ENCODE measurements at regions of chr1 and their contacts with region 1.

Region 1: GRCh38 chr1:15820478-15820877 is 13.0 kb upstream of the UQCRHL start:
- DNase-seq: no peak
- ATAC-seq: no peak
- H3K4me3 ChIP-seq: no peak overlapping the region
- H3K4me3 Mint-ChIP-seq: no peak overlapping the region
- H3K27ac ChIP-seq: no peak overlapping the region
- H3K27ac Mint-ChIP-seq: no peak overlapping the region
- H3K4me1 ChIP-seq: no peaks in the 10 kb centered on the region
- H3K4me1 Mint-ChIP-seq: peaks cover 3 to 14% (median 4%) of the 10 kb centered on the region in 7 donors
- H3K27me3 ChIP-seq: no peaks in the 10 kb centered on the region
- H3K27me3 Mint-ChIP-seq: no peaks in the 10 kb centered on the region

Region 2: GRCh38 chr1:15902882-15903281 is 82.4 kb after region 1 on chr1:
- CTCF ChIA-PET with region 1: interaction called, 4 read pairs
- POLR2A ChIA-PET with region 1: interaction called, 3 read pairs
- intact Hi-C with region 1: loop called in 1 of 2 experiments (anchors 1 kb)
- DNase-seq: no peak
- ATAC-seq: no peak
- H3K4me3 ChIP-seq: no peak overlapping the region
- H3K4me3 Mint-ChIP-seq: no peak overlapping the region
- H3K27ac ChIP-seq: no peak overlapping the region
- H3K27ac Mint-ChIP-seq: peak overlapping the region in 2 of 9 donors; percentile 18 to 53
- H3K4me1 ChIP-seq: peaks cover 0 to 3% of the 10 kb centered on the region in 2 donors
- H3K4me1 Mint-ChIP-seq: peaks cover 19 to 46% (median 41%) of the 10 kb centered on the region in 7 donors
- H3K27me3 ChIP-seq: no peaks in the 10 kb centered on the region
- H3K27me3 Mint-ChIP-seq: no peaks in the 10 kb centered on the region

Region 3: GRCh38 chr1:15918962-15919715 is 98.7 kb after region 1 on chr1:
- CTCF ChIA-PET with region 1: interaction called, 11 read pairs
- POLR2A ChIA-PET with region 1: interaction called, 4 read pairs
- intact Hi-C with region 1: loop called in 1 of 2 experiments (anchors 5 kb)
- DNase-seq: peak in 1 of 9 donors; percentile 74
- ATAC-seq: peak; percentile 68
- H3K4me3 ChIP-seq: no peak overlapping the region
- H3K4me3 Mint-ChIP-seq: peak overlapping the region in 4 of 10 donors; percentile 8 to 76 (median 20)
- H3K27ac ChIP-seq: no peak overlapping the region
- H3K27ac Mint-ChIP-seq: peak overlapping the region in 7 of 9 donors; percentile 16 to 77 (median 33)
- H3K4me1 ChIP-seq: peaks cover 10 to 22% of the 10 kb centered on the region in 2 donors
- H3K4me1 Mint-ChIP-seq: peaks cover 9 to 40% (median 31%) of the 10 kb centered on the region in 7 donors
- H3K27me3 ChIP-seq: no peaks in the 10 kb centered on the region
- H3K27me3 Mint-ChIP-seq: no peaks in the 10 kb centered on the region

Region 4: GRCh38 chr1:15994590-15995351 is 174.3 kb after region 1 on chr1:
- CTCF ChIA-PET with region 1: interaction called, 3 read pairs
- POLR2A ChIA-PET with region 1: no interaction called
- intact Hi-C with region 1: loop called in 1 of 2 experiments (anchors 1 kb)
- DNase-seq: peak in 4 of 9 donors; percentile 11 to 60 (median 30)
- ATAC-seq: peak; percentile 79
- H3K4me3 ChIP-seq: no peak overlapping the region
- H3K4me3 Mint-ChIP-seq: no peak overlapping the region
- H3K27ac ChIP-seq: no peak overlapping the region
- H3K27ac Mint-ChIP-seq: peak overlapping the region in 1 of 9 donors; percentile 9
- H3K4me1 ChIP-seq: no peaks in the 10 kb centered on the region
- H3K4me1 Mint-ChIP-seq: no peaks in the 10 kb centered on the region
- H3K27me3 ChIP-seq: no peaks in the 10 kb centered on the region
- H3K27me3 Mint-ChIP-seq: peaks cover 0 to 3% (median 0%) of the 10 kb centered on the region in 5 donors

Region 5: GRCh38 chr1:16055613-16056520 is 235.4 kb after region 1 on chr1:
- CTCF ChIA-PET with region 1: interaction called, 8 read pairs
- POLR2A ChIA-PET with region 1: no interaction called
- intact Hi-C with region 1: loop called (anchors 1 kb)
- DNase-seq: peak; percentile 71 to 87 (median 78)
- ATAC-seq: peak; percentile 97
- H3K4me3 ChIP-seq: no peak overlapping the region
- H3K4me3 Mint-ChIP-seq: peak overlapping the region in 2 of 10 donors; percentile 17 to 43
- H3K27ac ChIP-seq: no peak overlapping the region
- H3K27ac Mint-ChIP-seq: peak overlapping the region in 4 of 9 donors; percentile 45 to 76 (median 68)
- H3K4me1 ChIP-seq: no peaks in the 10 kb centered on the region
- H3K4me1 Mint-ChIP-seq: peaks cover 5 to 6% (median 6%) of the 10 kb centered on the region in 7 donors
- H3K27me3 ChIP-seq: no peaks in the 10 kb centered on the region
- H3K27me3 Mint-ChIP-seq: peaks cover 0 to 4% (median 0%) of the 10 kb centered on the region in 5 donors

Measured in naive thymus-derived CD4-positive, alpha-beta T cell (primary cell).